Activated CD4-positive, alpha-beta memory T cell treated with anti-CD3 and anti-CD28 coated beads for 36 hours (primary cell): ENCODE measurements at regions of chr4 and their contacts with region 1.

Region 1: DNA sequence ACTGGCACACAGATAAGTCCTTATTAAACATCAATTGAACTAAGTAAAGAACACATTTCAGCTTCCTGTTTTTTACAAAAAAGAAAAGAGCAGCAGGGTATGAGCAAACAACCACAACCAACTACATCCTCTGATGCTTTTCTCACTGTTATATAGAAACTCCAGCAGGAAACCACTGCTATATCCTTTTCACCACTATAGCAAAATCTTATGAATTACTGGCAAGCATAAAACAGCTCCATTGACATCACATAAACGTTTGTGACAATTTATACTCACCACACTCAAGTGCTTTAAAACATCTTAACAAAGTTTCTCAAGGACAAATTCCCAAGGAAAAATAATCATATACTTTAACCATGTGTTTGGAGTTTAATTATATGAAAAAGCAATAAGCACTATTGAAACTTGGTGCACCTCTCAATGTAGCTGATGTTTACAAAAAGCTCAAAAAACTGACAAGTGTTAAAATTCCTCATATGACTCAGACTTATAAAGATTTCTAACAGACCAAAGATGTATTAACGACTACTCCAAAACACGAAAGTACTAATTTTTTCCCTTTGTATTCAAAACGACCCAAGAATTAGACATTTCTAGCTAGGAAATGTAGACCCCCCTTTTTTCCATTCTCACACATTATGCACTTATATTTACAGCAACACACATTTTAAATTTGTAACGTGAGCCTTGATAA is 12.9 kb downstream of the GPRIN3 start:
- DNase-seq: no peak
- H3K4me3 Mint-ChIP-seq: peak overlapping the region; percentile 57
- H3K27ac Mint-ChIP-seq: peak overlapping the region; percentile 97
- H3K4me1 Mint-ChIP-seq: peaks cover 84% of the 10 kb centered on the region
- H3K27me3 Mint-ChIP-seq: no peaks in the 10 kb centered on the region

Region 2: DNA sequence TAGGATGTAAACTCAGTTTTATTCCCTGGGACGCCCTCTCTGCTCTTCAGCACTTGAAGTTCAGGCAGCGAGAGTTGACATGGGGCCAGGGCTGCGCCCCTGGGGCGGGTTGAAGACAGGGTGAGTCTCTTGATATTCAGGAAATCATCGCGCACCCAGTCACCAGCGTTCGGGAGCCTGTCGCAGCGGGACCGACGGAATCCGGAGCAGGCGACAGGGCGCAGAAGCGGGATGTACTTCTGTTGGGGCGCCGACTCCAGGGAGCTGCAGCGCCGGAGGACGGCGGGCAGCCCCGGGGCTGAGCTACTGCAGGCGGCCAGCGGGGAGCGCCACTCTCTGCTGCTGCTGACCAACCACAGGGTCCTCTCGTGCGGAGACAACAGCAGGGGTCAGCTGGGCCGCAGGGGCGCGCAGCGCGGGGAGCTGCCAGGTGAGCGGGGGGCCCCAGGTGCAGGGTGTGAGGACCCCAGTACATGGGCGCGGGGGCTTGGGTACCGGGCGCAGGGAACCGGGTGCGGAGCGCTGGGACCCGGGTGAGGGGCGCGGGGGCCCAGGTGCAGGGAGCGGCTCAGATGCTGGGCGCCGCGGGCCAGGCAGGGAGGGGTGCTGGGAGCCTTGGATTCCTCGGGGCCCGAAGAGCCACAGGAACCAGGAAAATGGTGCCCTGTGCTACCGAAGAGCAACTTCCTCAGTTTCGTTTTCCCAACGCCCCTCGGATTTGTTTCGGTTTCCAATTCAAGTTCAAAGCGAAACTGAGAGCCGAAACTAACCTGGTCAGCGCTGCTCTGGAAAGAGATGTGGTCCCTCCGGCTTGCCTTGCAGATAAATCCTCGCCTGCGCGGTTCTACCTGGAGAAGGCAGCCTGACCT is 915.8 kb before region 1 on chr4 and contains the start of gene HERC6:
- CTCF ChIA-PET with region 1: no interaction called
- POLR2A ChIA-PET with region 1: no interaction called
- intact Hi-C with region 1: loop called (anchors 10 kb)
- DNase-seq: peak; percentile 86
- H3K4me3 Mint-ChIP-seq: peak within 1 kb of the TSS; percentile 83
- H3K27ac Mint-ChIP-seq: peak within 1 kb of the TSS; percentile 85
- H3K4me1 Mint-ChIP-seq: peaks cover 49% of the 10 kb centered on the region
- H3K27me3 Mint-ChIP-seq: no peaks in the 10 kb centered on the region
- total RNA-seq, gene HERC6: 12.4 to 12.5 TPM

Region 3: GRCh38 chr4:88549815-88550214 is 744.9 kb before region 1 on chr4:
- CTCF ChIA-PET with region 1: no interaction called
- POLR2A ChIA-PET with region 1: no interaction called
- intact Hi-C with region 1: no loop called
- DNase-seq: no peak
- H3K4me3 Mint-ChIP-seq: no peak overlapping the region
- H3K27ac Mint-ChIP-seq: no peak overlapping the region
- H3K4me1 Mint-ChIP-seq: no peaks in the 10 kb centered on the region
- H3K27me3 Mint-ChIP-seq: no peaks in the 10 kb centered on the region

Region 4: DNA sequence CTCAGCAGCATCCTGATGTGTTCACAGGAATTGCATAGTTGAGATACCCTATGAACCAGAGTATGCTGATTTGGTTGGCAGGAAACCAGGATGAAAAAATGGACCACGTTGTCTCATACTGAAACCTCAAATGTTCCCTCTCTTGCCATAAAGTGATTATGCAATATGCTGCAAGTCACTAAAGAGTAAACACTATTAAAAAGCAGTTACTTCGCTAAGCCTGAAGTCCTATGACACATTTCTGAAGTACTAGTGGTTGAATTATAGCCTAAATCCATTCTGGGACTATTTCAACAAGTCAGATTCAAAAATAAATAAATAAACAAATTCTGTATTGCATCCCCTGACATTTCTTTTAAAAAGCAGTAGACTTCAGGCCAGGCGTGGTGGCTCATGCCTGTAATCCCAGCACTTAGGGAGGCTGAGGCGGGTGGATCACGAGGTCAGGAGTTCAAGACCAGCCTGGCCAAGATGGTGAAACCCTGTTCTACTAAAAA is 491.1 kb before region 1 on chr4:
- CTCF ChIA-PET with region 1: no interaction called
- POLR2A ChIA-PET with region 1: no interaction called
- intact Hi-C with region 1: loop called (anchors 5 kb)
- DNase-seq: peak; percentile 26
- H3K4me3 Mint-ChIP-seq: no peak overlapping the region
- H3K27ac Mint-ChIP-seq: no peak overlapping the region
- H3K4me1 Mint-ChIP-seq: peaks cover 18% of the 10 kb centered on the region
- H3K27me3 Mint-ChIP-seq: peaks cover 7% of the 10 kb centered on the region

Region 5: GRCh38 chr4:89226665-89227574 is 67.8 kb before region 1 on chr4:
- CTCF ChIA-PET with region 1: interaction called, 14 read pairs
- POLR2A ChIA-PET with region 1: no interaction called
- intact Hi-C with region 1: loop called (anchors 2 kb)
- DNase-seq: peak; percentile 82
- H3K4me3 Mint-ChIP-seq: peak overlapping the region; percentile 57
- H3K27ac Mint-ChIP-seq: no peak overlapping the region
- H3K4me1 Mint-ChIP-seq: peaks cover 16% of the 10 kb centered on the region
- H3K27me3 Mint-ChIP-seq: peaks cover 2% of the 10 kb centered on the region

Region 6: DNA sequence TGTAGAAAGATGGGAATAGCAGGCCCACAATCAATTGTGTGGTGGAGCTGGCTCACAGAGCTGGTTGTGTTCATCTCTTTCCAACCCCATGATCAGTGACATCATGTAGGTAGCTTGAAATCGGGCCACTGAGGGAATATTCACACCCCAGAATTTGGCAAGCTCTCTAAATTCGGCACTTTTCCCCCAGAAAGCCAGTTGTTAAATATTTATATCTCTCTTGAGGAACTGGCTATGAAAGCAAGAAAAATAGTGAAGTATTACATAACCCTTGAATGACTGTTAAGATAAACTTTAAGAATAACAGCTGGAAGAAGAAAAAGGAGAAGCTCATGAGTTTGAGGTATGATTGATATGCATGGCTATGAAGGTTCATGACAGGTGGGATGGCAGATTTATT is 26.0 kb before region 1 on chr4:
- CTCF ChIA-PET with region 1: no interaction called
- POLR2A ChIA-PET with region 1: interaction called, 4 read pairs
- intact Hi-C with region 1: loop called (anchors 2 kb)
- DNase-seq: no peak
- H3K4me3 Mint-ChIP-seq: no peak overlapping the region
- H3K27ac Mint-ChIP-seq: no peak overlapping the region
- H3K4me1 Mint-ChIP-seq: peaks cover 88% of the 10 kb centered on the region
- H3K27me3 Mint-ChIP-seq: no peaks in the 10 kb centered on the region

Region 7: DNA sequence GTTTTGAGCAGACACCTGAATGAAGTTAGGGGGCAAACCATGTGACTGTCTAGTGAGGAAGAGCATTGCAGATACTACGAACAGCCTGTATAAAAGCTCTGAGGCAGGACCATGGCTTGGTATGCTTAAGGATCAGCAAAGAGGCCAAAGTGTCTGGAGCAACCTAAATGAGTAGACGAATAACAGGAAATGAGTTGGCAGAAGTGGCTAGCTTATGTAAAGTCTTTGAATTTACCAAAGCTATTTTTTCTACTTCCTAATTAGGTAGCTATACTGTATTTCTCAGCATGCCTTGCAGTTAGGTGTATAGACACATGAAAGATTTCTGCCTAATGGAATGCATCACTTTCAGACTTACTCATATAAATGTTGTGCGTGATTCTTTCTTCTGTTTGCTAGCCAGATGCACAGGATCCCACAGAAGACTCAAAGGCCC is 22.2 kb after region 1 on chr4:
- CTCF ChIA-PET with region 1: interaction called, 15 read pairs
- POLR2A ChIA-PET with region 1: interaction called, 20 read pairs
- intact Hi-C with region 1: loop called (anchors 1 kb)
- DNase-seq: peak; percentile 41
- H3K4me3 Mint-ChIP-seq: peak overlapping the region; percentile 33
- H3K27ac Mint-ChIP-seq: peak overlapping the region; percentile 84
- H3K4me1 Mint-ChIP-seq: peaks cover 47% of the 10 kb centered on the region
- H3K27me3 Mint-ChIP-seq: no peaks in the 10 kb centered on the region